Panc1 (cell line): ENCODE measurements at regions of chr7 and their contacts with region 1.

Region 1: GRCh38 chr7:155529346-155529745 is 17.0 kb downstream of the CNPY1 start:
- DNase-seq: no peak
- ATAC-seq: no peak
- H3K4me3 ChIP-seq: no peak overlapping the region
- H3K27ac ChIP-seq: no peak overlapping the region
- H3K4me1 ChIP-seq: no peaks in the 10 kb centered on the region
- H3K27me3 ChIP-seq: peaks cover 16% of the 10 kb centered on the region
- CTCF ChIP-seq: no peak

Region 2: DNA sequence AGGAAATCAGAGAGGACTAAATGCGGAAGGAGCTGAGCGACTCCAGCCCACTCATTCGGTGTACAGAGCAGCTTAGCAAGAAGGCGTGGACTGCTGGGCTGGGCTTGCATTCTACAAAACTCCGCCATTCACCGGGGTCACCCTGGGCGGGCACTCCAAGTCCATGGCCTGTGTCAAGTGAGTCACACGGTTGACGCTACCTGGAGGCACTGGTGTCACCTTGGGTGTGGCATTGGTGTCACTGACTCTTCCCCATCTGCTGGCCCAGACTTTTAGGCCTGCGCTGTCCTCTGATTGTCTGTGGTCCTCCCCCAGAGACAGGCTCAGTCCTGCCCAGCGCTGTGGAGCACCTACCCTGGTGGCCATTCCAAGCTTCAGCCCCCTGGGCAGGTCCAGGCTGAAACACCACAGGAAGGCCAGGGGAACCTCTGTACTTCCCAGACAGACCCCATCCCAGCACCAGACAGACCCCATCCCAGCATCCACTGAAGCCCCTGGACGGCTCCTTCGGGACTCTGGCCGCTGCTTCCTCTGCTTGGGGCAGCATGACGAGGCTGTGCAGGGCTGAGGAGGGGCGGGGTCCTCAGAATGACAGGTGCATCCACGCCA is 47.7 kb after region 1 on chr7:
- CTCF ChIA-PET with region 1: no interaction called
- POLR2A ChIA-PET with region 1: interaction called, 11 read pairs
- in situ Hi-C with region 1: no loop called
- intact Hi-C with region 1: no loop called
- DNase-seq: no peak
- ATAC-seq: peak; percentile 42
- H3K4me3 ChIP-seq: no peak overlapping the region
- H3K27ac ChIP-seq: no peak overlapping the region
- H3K4me1 ChIP-seq: no peaks in the 10 kb centered on the region
- H3K27me3 ChIP-seq: no peaks in the 10 kb centered on the region
- CTCF ChIP-seq: no peak